Prostate gland (tissue), 2 donors: ENCODE measurements at regions of chr6 and their contacts with region 1.

Region 1: GRCh38 chr6:24720604-24721460 is 1.9 kb upstream of the C6orf62 start:
- DNase-seq: peak; percentile 100
- H3K4me3 ChIP-seq: peak overlapping the region; percentile 87 to 97
- H3K27ac ChIP-seq: peak overlapping the region; percentile 98 to 100
- H3K4me1 ChIP-seq: peaks cover 4% of the 10 kb centered on the region
- H3K27me3 ChIP-seq: no peaks in the 10 kb centered on the region
- CTCF ChIP-seq: peak in 1 of 4 experiments; percentile 6
- POLR2A ChIP-seq: peak; percentile 99

Region 2: DNA sequence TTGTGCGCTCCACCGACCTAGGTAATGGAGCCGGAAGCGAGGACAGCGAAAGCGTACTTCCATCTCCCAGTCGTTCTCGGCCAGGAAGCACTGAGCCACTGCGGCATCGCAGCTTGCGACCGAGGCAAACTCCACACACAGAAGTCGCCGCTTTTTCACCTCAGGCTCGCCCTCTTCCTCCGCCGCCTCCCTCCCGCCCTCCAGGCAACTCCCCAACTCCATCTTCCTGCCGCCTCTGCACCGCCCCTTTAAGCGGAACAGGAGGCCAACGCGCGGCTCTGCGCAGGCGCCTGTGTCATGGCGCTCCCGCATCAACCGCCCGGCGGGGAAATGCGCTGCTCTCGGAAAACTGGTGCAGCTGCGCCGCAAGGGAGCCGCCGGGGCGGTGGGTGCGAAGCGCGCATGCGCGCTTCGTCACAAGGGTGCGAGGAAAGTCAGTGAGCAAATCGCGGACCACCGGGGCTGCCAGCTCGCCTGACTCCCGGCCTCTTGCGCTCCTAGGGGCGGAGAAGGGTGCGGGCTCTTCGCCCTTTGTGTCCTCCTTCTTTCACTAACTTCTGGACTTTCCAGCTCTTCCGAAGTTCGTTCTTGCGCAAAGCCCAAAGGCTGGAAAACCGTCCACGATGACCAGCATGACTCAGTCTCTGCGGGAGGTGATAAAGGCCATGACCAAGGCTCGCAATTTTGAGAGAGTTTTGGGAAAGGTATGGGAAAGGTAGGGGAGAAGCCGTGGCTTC is 54.0 kb before region 1 on chr6 and contains the starts of genes ACOT13 and TDP2:
- intact Hi-C with region 1: loop called (anchors 2 kb)
- DNase-seq: peak; percentile 92
- H3K4me3 ChIP-seq: peak within 1 kb of the TSS; percentile 77 to 78
- H3K27ac ChIP-seq: peak within 1 kb of the TSS; percentile 90 to 93
- H3K4me1 ChIP-seq: peaks cover 14% of the 10 kb centered on the region
- H3K27me3 ChIP-seq: no peaks in the 10 kb centered on the region
- CTCF ChIP-seq: peak in 3 of 4 experiments; percentile 42 to 63 (median 62)
- POLR2A ChIP-seq: peak; percentile 89
- total RNA-seq, gene ACOT13: 8.8 to 15.9 TPM
- total RNA-seq, gene TDP2: 46.1 to 126 TPM

Region 3: GRCh38 chr6:24683297-24684296 is 37.2 kb before region 1 on chr6:
- intact Hi-C with region 1: no loop called
- DNase-seq: no peak
- H3K4me3 ChIP-seq: no peak overlapping the region
- H3K27ac ChIP-seq: no peak overlapping the region
- H3K4me1 ChIP-seq: no peaks in the 10 kb centered on the region
- H3K27me3 ChIP-seq: no peaks in the 10 kb centered on the region
- CTCF ChIP-seq: no peak
- POLR2A ChIP-seq: no peak

Region 4: GRCh38 chr6:24774696-24775519 is 54.1 kb after region 1 on chr6 and contains the start of gene GMNN:
- intact Hi-C with region 1: loop called (anchors 5 kb)
- DNase-seq: peak; percentile 97
- H3K4me3 ChIP-seq: peak within 1 kb of the TSS; percentile 94 to 99
- H3K27ac ChIP-seq: peak within 1 kb of the TSS; percentile 99
- H3K4me1 ChIP-seq: no peaks in the 10 kb centered on the region
- H3K27me3 ChIP-seq: no peaks in the 10 kb centered on the region
- CTCF ChIP-seq: peak in 1 of 4 experiments; percentile 23
- POLR2A ChIP-seq: peak; percentile 80
- total RNA-seq, gene GMNN: 9.0 to 129 TPM